Activated CD8-positive, alpha-beta T cell treated with anti-CD3 and anti-CD28 coated beads for 36 hours (primary cell): ENCODE measurements at regions of chr19 and their contacts with region 1.

Region 1: DNA sequence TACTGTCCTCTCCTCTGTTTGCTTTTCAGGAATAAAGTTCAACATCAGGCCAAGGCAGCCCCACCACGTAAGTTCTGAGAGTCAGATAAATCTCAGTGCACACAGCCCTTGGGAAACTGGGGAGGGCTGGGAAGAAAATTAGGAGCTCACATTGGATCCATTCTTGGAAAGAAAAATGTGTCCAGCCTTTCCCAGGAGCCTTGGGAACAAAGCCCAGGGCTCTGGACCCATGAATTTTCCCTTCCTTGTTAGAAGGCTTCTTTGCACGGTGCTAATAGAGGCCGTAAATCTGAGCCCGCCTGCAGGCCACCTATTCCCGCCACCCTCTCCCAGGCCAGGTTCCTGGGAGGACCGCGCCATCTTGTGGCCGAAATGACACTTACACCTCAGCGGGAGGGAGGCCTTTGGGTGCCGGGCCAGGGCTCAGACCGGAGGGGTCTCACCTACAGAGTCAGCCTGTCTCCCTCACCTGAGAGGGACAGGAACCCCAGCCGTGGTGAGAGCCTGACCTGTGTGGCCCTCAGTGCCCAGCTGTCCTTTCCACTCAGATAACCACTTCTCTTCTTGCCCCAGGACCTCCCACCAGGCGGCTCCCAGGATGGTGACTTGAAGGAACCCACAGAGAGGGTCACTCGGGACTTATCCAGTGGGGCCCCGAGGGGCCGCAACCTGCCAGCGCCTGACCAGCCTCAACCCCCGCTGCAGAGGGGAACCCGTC is 25.1 kb upstream of the KCTD15 start:
- DNase-seq: peak; percentile 77
- ATAC-seq: peak; percentile 86
- H3K4me3 Mint-ChIP-seq: no peak overlapping the region
- H3K27ac Mint-ChIP-seq: no peak overlapping the region
- H3K4me1 Mint-ChIP-seq: no peaks in the 10 kb centered on the region
- H3K27me3 Mint-ChIP-seq: peaks cover 10% of the 10 kb centered on the region
- CTCF ChIP-seq: peak; percentile 86

Region 2: GRCh38 chr19:33416307-33417215 is 355.0 kb before region 1 on chr19:
- CTCF ChIA-PET with region 1: interaction called, 19 read pairs
- POLR2A ChIA-PET with region 1: no interaction called
- intact Hi-C with region 1: loop called (anchors 5 kb)
- DNase-seq: peak; percentile 86
- ATAC-seq: peak; percentile 86
- H3K4me3 Mint-ChIP-seq: no peak overlapping the region
- H3K27ac Mint-ChIP-seq: no peak overlapping the region
- H3K4me1 Mint-ChIP-seq: peaks cover 4% of the 10 kb centered on the region
- H3K27me3 Mint-ChIP-seq: no peaks in the 10 kb centered on the region
- CTCF ChIP-seq: peak; percentile 75

Region 3: DNA sequence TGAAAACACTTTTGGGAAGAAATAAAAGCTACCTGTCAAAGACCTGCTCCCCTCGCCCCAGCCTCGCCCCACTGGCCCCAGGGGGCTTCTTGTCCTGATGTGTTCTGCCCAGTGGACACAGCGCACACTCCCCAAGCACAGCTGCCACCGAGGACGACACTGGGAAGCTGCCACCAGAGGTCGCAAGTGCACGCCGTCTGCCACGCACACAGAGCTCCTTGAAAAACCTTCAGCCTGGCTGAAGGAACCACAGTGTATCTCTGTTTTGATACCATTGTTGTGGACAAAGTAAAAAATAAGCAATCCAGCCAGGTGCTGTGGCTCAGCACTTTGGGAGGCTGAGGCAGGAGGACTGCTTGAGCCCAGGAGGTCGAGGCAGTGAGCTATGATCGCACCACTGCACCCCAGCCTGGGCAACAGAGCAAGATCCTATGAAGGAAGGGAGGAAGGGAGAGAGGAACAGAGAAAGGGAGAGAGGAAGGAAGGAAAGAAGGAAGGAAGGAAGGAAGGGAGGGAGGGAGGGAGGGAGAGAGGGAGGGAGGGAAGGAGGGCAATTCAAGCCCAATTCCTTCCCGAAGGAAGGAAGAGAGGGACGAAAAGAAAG is 340.8 kb before region 1 on chr19:
- CTCF ChIA-PET with region 1: interaction called, 39 read pairs
- POLR2A ChIA-PET with region 1: no interaction called
- intact Hi-C with region 1: loop called (anchors 2 kb)
- DNase-seq: peak; percentile 79
- ATAC-seq: peak; percentile 88
- H3K4me3 Mint-ChIP-seq: no peak overlapping the region
- H3K27ac Mint-ChIP-seq: peak overlapping the region; percentile 67
- H3K4me1 Mint-ChIP-seq: peaks cover 14% of the 10 kb centered on the region
- H3K27me3 Mint-ChIP-seq: no peaks in the 10 kb centered on the region
- CTCF ChIP-seq: peak; percentile 80